Tibial artery (tissue), 4 donors: ENCODE measurements at regions of chr9 and their contacts with region 1.

Region 1: GRCh38 chr9:137044500-137045177 is 1.3 kb downstream of the NPDC1 start:
- DNase-seq: no peak
- H3K4me3 ChIP-seq: peak overlapping the region; percentile 54 to 57
- H3K27ac ChIP-seq: no peak overlapping the region
- H3K4me1 ChIP-seq: peaks cover 0 to 47% (median 21%) of the 10 kb centered on the region in 4 donors
- H3K27me3 ChIP-seq: peaks cover 0 to 32% of the 10 kb centered on the region in 2 donors
- CTCF ChIP-seq: no peak

Region 2: DNA sequence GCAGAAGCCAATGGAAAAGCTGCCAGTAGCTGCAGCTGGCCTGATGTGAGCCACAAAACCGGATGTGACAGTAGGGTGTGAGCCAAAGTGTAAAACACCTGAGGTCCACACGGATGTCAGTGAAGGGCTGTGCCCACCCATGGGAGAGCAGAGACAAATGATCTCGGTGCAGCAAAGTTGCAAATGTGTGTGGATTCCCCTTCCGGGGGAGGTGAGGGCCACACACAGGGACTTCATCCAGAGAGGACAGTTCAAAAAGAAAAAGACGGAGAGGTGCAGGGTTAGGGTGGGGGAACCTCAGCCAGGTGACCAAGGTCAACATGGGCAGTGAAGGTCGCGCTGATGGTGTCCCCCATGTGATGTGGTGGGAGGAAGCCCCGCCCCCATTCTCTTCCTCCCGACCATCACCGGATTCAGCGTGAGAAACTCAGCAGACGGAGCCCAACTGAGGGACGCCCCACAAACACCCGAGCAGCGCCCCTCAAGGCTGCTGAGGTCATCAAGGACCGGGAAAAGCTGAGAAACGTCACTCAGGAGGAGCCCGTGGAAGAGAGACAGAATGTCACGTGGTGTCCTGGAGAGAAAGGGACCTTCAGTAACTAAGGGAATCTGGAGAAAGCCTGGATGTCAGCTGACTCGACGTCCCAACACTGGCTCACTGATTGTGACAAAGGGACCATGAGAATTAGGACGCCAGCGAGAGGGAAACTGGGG is 78.7 kb before region 1 on chr9:
- intact Hi-C with region 1: no loop called
- DNase-seq: no peak
- H3K4me3 ChIP-seq: no peak overlapping the region
- H3K27ac ChIP-seq: no peak overlapping the region
- H3K4me1 ChIP-seq: peaks cover 0 to 17% (median 10%) of the 10 kb centered on the region in 4 donors
- H3K27me3 ChIP-seq: peaks cover 0 to 30% of the 10 kb centered on the region in 2 donors
- CTCF ChIP-seq: no peak

Region 3: GRCh38 chr9:137021979-137022619 is 22.5 kb before region 1 on chr9:
- intact Hi-C with region 1: no loop called
- DNase-seq: no peak
- H3K4me3 ChIP-seq: no peak overlapping the region
- H3K27ac ChIP-seq: no peak overlapping the region
- H3K4me1 ChIP-seq: peaks cover 0 to 18% (median 8%) of the 10 kb centered on the region in 4 donors
- H3K27me3 ChIP-seq: no peaks in the 10 kb centered on the region
- CTCF ChIP-seq: no peak

Region 4: GRCh38 chr9:137077010-137077747 is 32.5 kb after region 1 on chr9 and contains the start of gene UAP1L1:
- intact Hi-C with region 1: loop called (anchors 5 kb)
- DNase-seq: peak; percentile 87 to 88
- H3K4me3 ChIP-seq: peak within 1 kb of the TSS; percentile 54 to 65
- H3K27ac ChIP-seq: peak within 1 kb of the TSS; percentile 52 to 63
- H3K4me1 ChIP-seq: peaks cover 4 to 30% (median 22%) of the 10 kb centered on the region in 4 donors
- H3K27me3 ChIP-seq: peaks cover 0 to 31% of the 10 kb centered on the region in 2 donors
- CTCF ChIP-seq: no peak